ENCODE measurements at regions of chr10 and their contacts with region 1.

Region 1: DNA sequence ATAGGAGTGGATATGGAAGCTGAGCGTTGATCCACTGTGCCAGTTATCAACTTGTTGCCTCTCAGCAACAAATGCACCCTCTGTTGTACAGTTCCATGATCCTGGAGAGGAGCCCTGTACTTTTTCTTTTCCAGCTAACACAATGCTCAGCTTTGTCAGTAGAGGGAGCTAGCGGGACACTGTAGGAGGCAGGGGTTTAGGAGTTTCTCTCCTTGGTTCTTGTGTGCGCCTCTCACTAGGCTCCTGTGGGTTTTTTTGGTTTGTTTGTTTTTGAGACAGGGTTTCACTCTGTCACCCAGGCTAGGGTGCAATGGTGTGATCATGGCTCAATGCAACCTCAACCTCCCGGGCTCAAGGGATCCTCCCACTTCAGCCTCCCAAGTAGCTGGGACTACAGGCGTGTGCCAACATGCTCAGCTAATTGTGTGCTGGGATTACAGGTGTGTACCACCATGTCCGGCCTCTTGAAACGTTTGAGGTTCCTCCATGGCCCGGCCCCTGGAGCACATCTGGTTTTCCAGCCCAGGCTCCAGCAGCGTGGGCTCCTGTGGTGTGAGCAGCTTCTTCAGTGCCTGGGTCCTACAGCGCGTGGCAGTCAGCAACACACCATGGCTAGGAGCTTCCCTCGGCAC is 12.0 kb upstream of the MARVELD1 start:
- DNase-seq: no peak
- H3K4me3 ChIP-seq: no peak overlapping the region
- CTCF ChIP-seq: peak; percentile 86

Region 2: GRCh38 chr10:97311227-97311626 is 390.3 kb before region 1 on chr10:
- CTCF ChIA-PET with region 1: no interaction called
- POLR2A ChIA-PET with region 1: no interaction called
- DNase-seq: no peak
- H3K4me3 ChIP-seq: no peak overlapping the region
- CTCF ChIP-seq: no peak

Region 3: GRCh38 chr10:97686962-97687784 is 14.4 kb before region 1 on chr10 and contains the start of gene AVPI1:
- CTCF ChIA-PET with region 1: interaction called, 305 read pairs
- POLR2A ChIA-PET with region 1: interaction called, 3 read pairs
- DNase-seq: peak; percentile 82
- H3K4me3 ChIP-seq: peak within 1 kb of the TSS; percentile 82
- CTCF ChIP-seq: no peak

Region 4: GRCh38 chr10:97714048-97714371 is 12.5 kb after region 1 on chr10:
- CTCF ChIA-PET with region 1: interaction called, 147 read pairs
- POLR2A ChIA-PET with region 1: interaction called, 3 read pairs
- DNase-seq: no peak
- H3K4me3 ChIP-seq: peak overlapping the region; percentile 69
- CTCF ChIP-seq: peak; percentile 33